WTC11 (cell line): ENCODE measurements at regions of chr17 and their contacts with region 1.

Region 1: DNA sequence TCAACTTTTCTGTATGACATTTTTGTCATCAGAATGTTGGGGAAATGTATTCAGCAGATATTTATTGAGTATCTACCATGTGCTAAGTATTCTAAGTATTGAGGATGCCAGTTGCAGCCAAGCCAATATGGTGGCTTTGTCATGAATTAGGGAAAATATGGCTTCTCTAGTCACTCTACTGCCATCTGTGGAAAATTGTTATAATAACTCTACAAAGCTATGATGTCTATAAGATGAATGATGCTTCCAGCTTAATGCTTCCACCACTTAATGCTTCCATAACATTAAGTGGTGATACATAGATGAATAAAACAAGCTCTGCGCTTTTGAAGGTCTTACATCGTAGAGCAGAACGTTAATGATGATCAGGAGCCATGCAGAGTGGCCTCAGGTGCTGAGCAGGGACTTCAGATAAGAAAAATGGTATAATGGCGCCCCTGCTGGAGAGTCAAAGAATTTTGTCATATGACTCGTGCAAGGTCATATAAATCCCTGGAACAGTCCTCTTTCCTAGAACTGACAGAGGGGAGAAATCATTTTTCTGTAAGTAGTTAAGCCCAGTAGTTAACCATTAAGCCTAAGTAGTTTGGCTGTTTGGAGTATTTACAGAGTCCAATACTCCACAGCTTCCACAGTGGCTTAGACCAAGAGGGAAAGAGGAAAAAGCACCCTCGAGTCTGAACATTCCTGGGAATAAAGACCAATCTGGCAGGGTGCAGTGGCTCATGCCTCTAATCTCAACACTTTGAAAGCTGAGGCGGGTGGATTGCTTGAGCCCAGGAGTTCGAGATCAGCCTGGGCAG is 2.7 kb upstream of the TMIGD1 start:
- DNase-seq: peak; percentile 62
- ATAC-seq: peak; percentile 46
- H3K4me3 Mint-ChIP-seq: no peak overlapping the region
- H3K27ac Mint-ChIP-seq: no peak overlapping the region
- H3K4me1 Mint-ChIP-seq: peaks cover 14% of the 10 kb centered on the region
- H3K27me3 Mint-ChIP-seq: peaks cover 35% of the 10 kb centered on the region
- CTCF ChIP-seq: peak; percentile 70

Region 2: GRCh38 chr17:30291543-30292285 is 44.9 kb before region 1 on chr17 and contains the start of gene BLMH:
- CTCF ChIA-PET with region 1: interaction called, 12 read pairs
- POLR2A ChIA-PET with region 1: no interaction called
- DNase-seq: peak; percentile 72
- ATAC-seq: peak; percentile 85
- H3K4me3 Mint-ChIP-seq: peak within 1 kb of the TSS; percentile 87
- H3K27ac Mint-ChIP-seq: 0 out of 2 replicates have a peak within 1 kb of the TSS, but pooled peaks have one; percentile 41
- H3K4me1 Mint-ChIP-seq: peaks cover 15% of the 10 kb centered on the region
- H3K27me3 Mint-ChIP-seq: peaks cover 5% of the 10 kb centered on the region; the same call in 1 of the 2 replicates
- CTCF ChIP-seq: no peak
- total RNA-seq, gene BLMH: 63.9 to 67.3 TPM (median 65.3 TPM) in 3 replicates